Activated CD4-positive, alpha-beta memory T cell treated with anti-CD3 and anti-CD28 coated beads for 36 hours (primary cell): ENCODE measurements at regions of chr10 and their contacts with region 1.

Region 1: GRCh38 chr10:59808896-59809643 is 55.8 kb upstream of the MRLN start:
- DNase-seq: peak; percentile 84
- H3K4me3 Mint-ChIP-seq: no peak overlapping the region
- H3K27ac Mint-ChIP-seq: no peak overlapping the region
- H3K4me1 Mint-ChIP-seq: peaks cover 3% of the 10 kb centered on the region
- H3K27me3 Mint-ChIP-seq: no peaks in the 10 kb centered on the region

Region 2: DNA sequence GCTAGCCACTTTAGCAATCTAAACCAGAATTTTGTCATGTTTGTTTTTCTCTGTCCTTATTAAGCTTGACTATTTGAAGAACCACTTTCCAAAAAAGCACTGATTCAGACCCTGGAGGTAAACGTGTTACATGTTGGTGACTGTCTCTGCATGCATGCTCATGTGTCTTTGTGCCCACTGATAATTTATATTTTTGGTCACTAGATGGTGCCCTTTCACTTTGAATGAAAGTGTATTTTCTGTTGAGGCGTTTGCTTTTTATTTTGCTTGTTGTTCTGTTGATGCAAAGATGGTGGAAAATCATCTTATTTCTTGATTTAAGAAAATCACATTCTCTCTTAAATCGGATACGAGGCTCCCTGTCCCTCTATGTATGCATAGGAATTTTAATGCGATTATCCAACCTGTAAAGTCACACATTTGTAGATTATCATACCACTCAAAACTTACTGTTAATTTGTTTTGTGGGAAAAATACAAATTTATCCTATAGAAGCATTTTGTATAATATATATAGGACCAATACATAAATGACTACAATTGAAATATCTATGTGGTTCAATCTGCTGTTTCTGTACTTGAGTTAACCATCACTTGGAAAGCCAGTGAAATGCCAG is 1027.1 kb before region 1 on chr10:
- CTCF ChIA-PET with region 1: no interaction called
- POLR2A ChIA-PET with region 1: no interaction called
- intact Hi-C with region 1: loop called (anchors 5 kb)
- DNase-seq: no peak
- H3K4me3 Mint-ChIP-seq: no peak overlapping the region
- H3K27ac Mint-ChIP-seq: no peak overlapping the region
- H3K4me1 Mint-ChIP-seq: no peaks in the 10 kb centered on the region
- H3K27me3 Mint-ChIP-seq: peaks cover 3% of the 10 kb centered on the region

Region 3: DNA sequence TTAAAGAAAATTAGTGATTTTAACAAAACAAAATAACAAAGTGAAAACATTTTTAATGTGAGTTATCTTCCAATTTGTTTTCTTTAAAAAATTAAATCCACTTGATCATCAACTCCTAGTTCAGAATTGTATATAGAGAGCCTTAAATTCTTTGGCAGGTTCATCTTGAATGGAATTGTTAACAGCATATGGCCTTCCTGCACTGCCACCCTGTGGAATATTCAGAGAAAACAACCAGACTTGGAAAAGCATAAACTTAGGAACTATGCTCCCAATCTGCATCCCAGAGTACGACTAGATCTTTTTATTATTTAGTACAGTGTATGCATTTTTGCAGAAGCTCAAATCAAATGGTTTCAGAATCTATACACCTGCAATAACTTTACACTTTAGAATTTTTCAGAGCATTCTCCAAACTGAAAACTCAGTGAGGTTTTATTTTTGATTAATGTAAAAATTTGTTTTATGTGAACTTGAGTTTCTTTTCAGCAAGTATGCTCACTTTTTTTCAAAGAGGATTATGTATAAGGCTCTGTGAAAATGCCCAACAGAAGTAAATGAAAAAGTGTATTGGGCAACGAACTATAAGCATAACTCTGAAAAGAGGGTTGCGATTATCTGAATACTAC is 625.5 kb after region 1 on chr10:
- CTCF ChIA-PET with region 1: no interaction called
- POLR2A ChIA-PET with region 1: no interaction called
- intact Hi-C with region 1: no loop called
- DNase-seq: peak; percentile 15
- H3K4me3 Mint-ChIP-seq: no peak overlapping the region
- H3K27ac Mint-ChIP-seq: no peak overlapping the region
- H3K4me1 Mint-ChIP-seq: no peaks in the 10 kb centered on the region
- H3K27me3 Mint-ChIP-seq: no peaks in the 10 kb centered on the region